ENCODE measurements at regions of chr9 and their contacts with region 1.

Region 1: DNA sequence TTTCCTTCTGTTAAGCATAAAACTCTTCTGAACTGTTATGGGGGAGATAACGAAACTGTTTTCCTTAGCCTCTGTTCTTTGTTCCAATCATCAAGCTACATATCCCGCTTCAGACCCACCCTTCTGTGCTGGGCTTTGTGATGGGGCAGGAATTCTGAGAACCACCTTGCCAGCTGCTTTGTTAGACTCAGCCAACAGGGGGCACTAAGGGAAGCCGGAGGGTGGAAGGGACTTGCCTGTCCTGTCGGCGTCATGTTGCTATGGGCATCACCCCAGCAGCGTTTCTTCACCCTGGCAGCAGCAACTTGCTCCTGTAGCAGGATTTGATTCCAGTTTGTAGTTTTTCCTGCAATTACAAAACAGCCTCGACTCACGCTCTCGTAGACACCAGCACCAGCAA is 169.1 kb downstream of the CAAP1 start:
- DNase-seq: no peak
- H3K4me3 ChIP-seq: no peak overlapping the region
- H3K27ac ChIP-seq: no peak overlapping the region
- H3K4me1 ChIP-seq: no peaks in the 10 kb centered on the region
- CTCF ChIP-seq: peak; percentile 61

Region 2: GRCh38 chr9:26346942-26347477 is 376.5 kb before region 1 on chr9:
- CTCF ChIA-PET with region 1: no interaction called
- POLR2A ChIA-PET with region 1: no interaction called
- intact Hi-C with region 1: no loop called
- DNase-seq: no peak
- H3K4me3 ChIP-seq: no peak overlapping the region
- H3K27ac ChIP-seq: no peak overlapping the region
- H3K4me1 ChIP-seq: no peaks in the 10 kb centered on the region
- CTCF ChIP-seq: no peak

Region 3: GRCh38 chr9:26669666-26670352 is 53.7 kb before region 1 on chr9:
- CTCF ChIA-PET with region 1: no interaction called
- POLR2A ChIA-PET with region 1: no interaction called
- intact Hi-C with region 1: loop called (anchors 10 kb)
- DNase-seq: peak; percentile 12
- H3K4me3 ChIP-seq: no peak overlapping the region
- H3K27ac ChIP-seq: no peak overlapping the region
- H3K4me1 ChIP-seq: no peaks in the 10 kb centered on the region
- CTCF ChIP-seq: no peak

Measured in OCI-LY7 (cell line).